Activated CD4-positive, alpha-beta T cell treated with anti-CD3 and anti-CD28 coated beads, Interleukin-2, amount 10 ng/mL, durations not matched to agents 24 days and 14 days (primary cell): ENCODE measurements at regions of chr11 and their contacts with region 1.

Region 1: GRCh38 chr11:34585735-34586487 is 35.0 kb upstream of the EHF start:
- DNase-seq: peak; percentile 57
- H3K4me3 Mint-ChIP-seq: no peak overlapping the region
- H3K27ac Mint-ChIP-seq: no peak overlapping the region
- H3K4me1 Mint-ChIP-seq: no peaks in the 10 kb centered on the region
- H3K27me3 Mint-ChIP-seq: peaks cover 40% of the 10 kb centered on the region

Region 2: GRCh38 chr11:34114471-34114870 is 471.4 kb before region 1 on chr11:
- intact Hi-C with region 1: no loop called
- DNase-seq: no peak
- H3K4me3 Mint-ChIP-seq: no peak overlapping the region
- H3K27ac Mint-ChIP-seq: no peak overlapping the region
- H3K4me1 Mint-ChIP-seq: peaks cover 8% of the 10 kb centered on the region
- H3K27me3 Mint-ChIP-seq: no peaks in the 10 kb centered on the region

Region 3: GRCh38 chr11:34537656-34538055 is 48.3 kb before region 1 on chr11:
- intact Hi-C with region 1: no loop called
- DNase-seq: no peak
- H3K4me3 Mint-ChIP-seq: no peak overlapping the region
- H3K27ac Mint-ChIP-seq: no peak overlapping the region
- H3K4me1 Mint-ChIP-seq: no peaks in the 10 kb centered on the region
- H3K27me3 Mint-ChIP-seq: peaks cover 11% of the 10 kb centered on the region

Region 4: GRCh38 chr11:34840736-34841386 is 254.9 kb after region 1 on chr11:
- intact Hi-C with region 1: loop called (anchors 5 kb)
- DNase-seq: peak; percentile 69
- H3K4me3 Mint-ChIP-seq: no peak overlapping the region
- H3K27ac Mint-ChIP-seq: no peak overlapping the region
- H3K4me1 Mint-ChIP-seq: no peaks in the 10 kb centered on the region
- H3K27me3 Mint-ChIP-seq: peaks cover 16% of the 10 kb centered on the region

Region 5: GRCh38 chr11:34890812-34891211 is 304.9 kb after region 1 on chr11:
- intact Hi-C with region 1: loop called (anchors 1 kb)
- DNase-seq: peak; percentile 46
- H3K4me3 Mint-ChIP-seq: no peak overlapping the region
- H3K27ac Mint-ChIP-seq: no peak overlapping the region
- H3K4me1 Mint-ChIP-seq: no peaks in the 10 kb centered on the region
- H3K27me3 Mint-ChIP-seq: no peaks in the 10 kb centered on the region

Region 6: GRCh38 chr11:35485656-35486322 is 899.9 kb after region 1 on chr11:
- intact Hi-C with region 1: loop called (anchors 2 kb)
- DNase-seq: peak; percentile 90
- H3K4me3 Mint-ChIP-seq: no peak overlapping the region
- H3K27ac Mint-ChIP-seq: no peak overlapping the region
- H3K4me1 Mint-ChIP-seq: no peaks in the 10 kb centered on the region
- H3K27me3 Mint-ChIP-seq: peaks cover 30% of the 10 kb centered on the region